ENCODE measurements at regions of chr7 and their contacts with region 1.

Region 1: GRCh38 chr7:84092207-84092606 is 102.4 kb downstream of the SEMA3A start:
- DNase-seq: no peak
- H3K4me3 Mint-ChIP-seq: no peak overlapping the region
- H3K27ac Mint-ChIP-seq: no peak overlapping the region
- H3K4me1 Mint-ChIP-seq: peaks cover 10% of the 10 kb centered on the region
- H3K27me3 Mint-ChIP-seq: no peaks in the 10 kb centered on the region
- CTCF ChIP-seq: no peak

Region 2: GRCh38 chr7:84049034-84049433 is 43.2 kb before region 1 on chr7:
- CTCF ChIA-PET with region 1: no interaction called
- intact Hi-C with region 1: loop called (anchors 5 kb)
- DNase-seq: no peak
- H3K4me3 Mint-ChIP-seq: no peak overlapping the region
- H3K27ac Mint-ChIP-seq: no peak overlapping the region
- H3K4me1 Mint-ChIP-seq: peaks cover 22% of the 10 kb centered on the region
- H3K27me3 Mint-ChIP-seq: no peaks in the 10 kb centered on the region
- CTCF ChIP-seq: no peak

Measured in Calu3 (cell line).